GM12878 (cell line): ENCODE measurements at regions of chr2 and their contacts with region 1.

Region 1: DNA sequence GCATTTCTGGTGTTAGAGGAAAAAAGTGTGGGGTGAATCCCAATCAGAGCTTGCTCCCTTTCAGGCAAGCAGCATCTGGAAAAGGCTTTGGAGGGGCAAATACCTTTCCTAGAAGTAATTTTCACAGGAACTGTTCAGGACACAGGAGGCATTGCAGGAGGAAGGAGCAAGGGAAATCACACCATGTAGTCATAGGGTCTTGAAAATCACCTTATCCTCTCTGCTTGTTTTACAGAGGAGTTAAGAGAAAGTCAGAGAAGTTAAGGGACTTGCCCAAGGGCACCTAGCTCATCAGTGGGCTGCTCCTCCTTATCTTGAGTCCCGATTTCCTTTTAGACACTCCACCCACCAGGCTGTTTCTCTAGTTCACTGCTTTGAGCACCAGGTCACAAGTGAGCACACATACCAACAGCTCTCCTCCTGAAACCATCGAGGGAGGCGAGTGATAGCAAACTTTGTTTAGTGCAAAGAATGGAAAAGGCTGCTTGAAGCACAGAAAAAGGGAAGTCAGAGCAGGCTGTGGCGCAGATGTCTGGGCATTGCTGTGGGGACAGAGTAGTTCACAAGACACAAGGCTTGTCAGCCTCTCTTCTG is 89.2 kb upstream of the CXCR4 start:
- DNase-seq: peak; percentile 68
- ATAC-seq: peak; percentile 79
- H3K4me3 ChIP-seq: no peak overlapping the region
- H3K27ac ChIP-seq: no peak overlapping the region
- H3K4me1 ChIP-seq: peaks cover 21% of the 10 kb centered on the region
- H3K27me3 ChIP-seq: no peaks in the 10 kb centered on the region; a peak in 1 of 4 replicates
- CTCF ChIP-seq: no peak
- EP300 ChIP-seq: peak; percentile 26 to 55; a peak in 2 of 4 replicates
- POLR2A ChIP-seq: no peak
- RAD21 ChIP-seq: 0 out of 2 replicates have a peak, but pooled peaks have one; percentile 0

Region 2: GRCh38 chr2:134623796-134624195 is 1583.3 kb before region 1 on chr2:
- CTCF ChIA-PET with region 1: no interaction called
- POLR2A ChIA-PET with region 1: no interaction called
- RAD21 ChIA-PET with region 1: no interaction called
- SMC1A ChIA-PET with region 1: no interaction called
- in situ Hi-C with region 1: no loop called
- intact Hi-C with region 1: no loop called
- DNase-seq: peak; percentile 83
- ATAC-seq: peak; percentile 91
- H3K4me3 ChIP-seq: no peak overlapping the region
- H3K27ac ChIP-seq: peak overlapping the region; percentile 88
- H3K4me1 ChIP-seq: peaks cover 21% of the 10 kb centered on the region
- H3K27me3 ChIP-seq: no peaks in the 10 kb centered on the region
- CTCF ChIP-seq: no peak
- EP300 ChIP-seq: peak; percentile 32 to 67; a peak in 2 of 4 replicates
- POLR2A ChIP-seq: no peak
- RAD21 ChIP-seq: 0 out of 2 replicates have a peak, but pooled peaks have one; percentile 4

Region 3: DNA sequence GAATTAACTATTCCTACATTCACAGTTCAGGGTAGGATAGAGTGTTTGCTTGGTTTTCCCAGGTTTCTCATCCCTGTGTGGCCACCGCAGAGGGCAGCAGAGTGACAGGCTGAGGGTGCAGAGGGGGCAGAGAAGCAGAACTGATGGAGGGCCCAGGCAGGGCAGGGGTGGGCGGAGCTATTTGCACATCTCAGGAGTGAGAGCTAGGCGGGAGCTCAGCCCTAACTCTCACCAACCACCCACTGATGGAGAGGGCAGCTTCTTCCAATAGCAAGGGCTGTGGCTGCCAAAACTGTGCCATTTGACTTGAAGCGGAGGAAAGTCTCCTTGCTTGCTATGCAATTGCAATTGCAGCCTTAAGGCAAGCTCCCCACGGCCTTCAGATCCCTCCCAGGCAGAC is 209.7 kb before region 1 on chr2:
- CTCF ChIA-PET with region 1: interaction called, 3 read pairs
- POLR2A ChIA-PET with region 1: no interaction called
- RAD21 ChIA-PET with region 1: interaction called, 21 read pairs
- SMC1A ChIA-PET with region 1: interaction called, 14 read pairs
- in situ Hi-C with region 1: no loop called
- intact Hi-C with region 1: no loop called
- DNase-seq: no peak
- ATAC-seq: peak; percentile 82
- H3K4me3 ChIP-seq: no peak overlapping the region
- H3K27ac ChIP-seq: no peak overlapping the region
- H3K4me1 ChIP-seq: peaks cover 11% of the 10 kb centered on the region
- H3K27me3 ChIP-seq: no peaks in the 10 kb centered on the region
- CTCF ChIP-seq: peak; percentile 5 to 27 (median 7); a peak in 3 of 6 replicates
- EP300 ChIP-seq: no peak
- POLR2A ChIP-seq: no peak
- RAD21 ChIP-seq: peak; percentile 61

Region 4: DNA sequence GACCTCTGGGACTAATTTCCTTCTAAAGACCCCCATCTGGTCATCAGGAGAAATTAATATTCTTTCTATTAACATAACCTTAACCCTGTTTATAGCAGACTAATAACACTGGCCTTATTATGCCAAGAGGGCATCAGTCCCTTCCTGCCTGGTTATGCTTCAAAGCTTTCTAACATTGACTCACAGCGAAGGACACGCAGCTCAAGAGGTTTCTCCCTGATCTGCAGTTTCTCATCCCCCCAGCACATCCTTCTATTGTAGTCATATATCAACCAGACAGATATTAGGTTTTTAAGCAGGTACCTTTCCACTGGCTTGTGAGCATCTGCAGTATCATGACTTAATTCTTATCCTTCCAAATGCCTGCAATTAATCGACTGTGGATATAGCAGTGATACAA is 10.9 kb after region 1 on chr2:
- CTCF ChIA-PET with region 1: interaction called, 5 read pairs
- POLR2A ChIA-PET with region 1: interaction called, 5 read pairs
- RAD21 ChIA-PET with region 1: interaction called, 28 read pairs
- SMC1A ChIA-PET with region 1: interaction called, 47 read pairs
- in situ Hi-C with region 1: no loop called
- intact Hi-C with region 1: no loop called
- DNase-seq: no peak
- ATAC-seq: peak; percentile 77
- H3K4me3 ChIP-seq: no peak overlapping the region
- H3K27ac ChIP-seq: no peak overlapping the region
- H3K4me1 ChIP-seq: no peaks in the 10 kb centered on the region
- H3K27me3 ChIP-seq: peaks cover 0 to 9% of the 10 kb centered on the region in 2 experiments; a peak in 1 of 4 replicates
- CTCF ChIP-seq: no peak
- EP300 ChIP-seq: peak in 1 of 2 experiments; percentile 40; a peak in 1 of 4 replicates
- POLR2A ChIP-seq: no peak
- RAD21 ChIP-seq: no peak

Region 5: GRCh38 chr2:136246086-136246669 is 39.1 kb after region 1 on chr2:
- CTCF ChIA-PET with region 1: interaction called, 4 read pairs
- POLR2A ChIA-PET with region 1: interaction called, 8 read pairs
- RAD21 ChIA-PET with region 1: interaction called, 48 read pairs
- SMC1A ChIA-PET with region 1: interaction called, 41 read pairs
- in situ Hi-C with region 1: no loop called
- intact Hi-C with region 1: no loop called
- DNase-seq: peak; percentile 60
- ATAC-seq: peak; percentile 96
- H3K4me3 ChIP-seq: no peak overlapping the region
- H3K27ac ChIP-seq: no peak overlapping the region; the same call in 1 of the 2 replicates
- H3K4me1 ChIP-seq: peaks cover 3% of the 10 kb centered on the region; the same call in 1 of the 2 replicates
- H3K27me3 ChIP-seq: 0 out of 4 replicates have a peak, but pooled peaks cover 0 to 2% of the 10 kb centered on the region in 2 experiments
- CTCF ChIP-seq: no peak
- EP300 ChIP-seq: peak; percentile 78 to 87; a peak in 3 of 4 replicates
- POLR2A ChIP-seq: no peak
- RAD21 ChIP-seq: no peak

Region 6: DNA sequence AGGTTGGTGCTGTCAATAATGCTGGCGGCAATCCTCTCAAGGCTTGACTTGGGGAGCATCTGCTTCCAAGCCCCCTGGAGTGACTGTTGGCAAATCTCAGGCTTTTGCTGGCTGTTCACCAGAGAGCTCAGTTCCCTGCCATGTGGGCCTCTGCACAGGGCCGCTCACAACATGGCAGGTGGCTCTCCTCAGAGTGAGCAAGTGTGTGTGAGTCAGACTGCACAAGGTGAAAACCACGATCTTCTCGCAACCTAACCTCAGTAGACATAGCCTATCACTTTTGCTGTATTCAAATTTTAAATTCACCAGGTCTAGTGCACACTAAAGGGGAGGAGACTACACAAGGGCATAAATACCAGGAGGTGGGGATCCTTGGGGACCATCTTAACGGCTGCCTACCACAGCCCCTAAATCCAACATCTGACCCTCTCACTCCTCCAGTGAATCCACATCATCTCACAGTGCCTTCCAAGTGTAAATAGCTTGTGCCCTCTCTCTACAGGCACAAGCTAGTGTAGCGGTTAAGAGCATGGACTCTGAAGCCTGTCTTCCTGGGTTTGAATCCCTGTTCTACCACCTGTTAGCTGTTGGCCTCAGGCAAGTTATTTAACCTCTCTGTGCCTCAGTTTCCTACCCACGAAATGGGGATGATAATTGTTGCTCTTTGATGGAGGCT is 98.5 kb after region 1 on chr2:
- CTCF ChIA-PET with region 1: interaction called, 3 read pairs
- POLR2A ChIA-PET with region 1: interaction called, 3 read pairs
- RAD21 ChIA-PET with region 1: interaction called, 8 read pairs
- SMC1A ChIA-PET with region 1: interaction called, 17 read pairs
- in situ Hi-C with region 1: no loop called
- intact Hi-C with region 1: loop called (anchors 2 kb)
- DNase-seq: no peak
- ATAC-seq: peak; percentile 93
- H3K4me3 ChIP-seq: no peak overlapping the region
- H3K27ac ChIP-seq: no peak overlapping the region
- H3K4me1 ChIP-seq: peaks cover 6% of the 10 kb centered on the region
- H3K27me3 ChIP-seq: peaks cover 0 to 5% of the 10 kb centered on the region in 2 experiments; a peak in 1 of 4 replicates
- CTCF ChIP-seq: no peak
- EP300 ChIP-seq: peak; percentile 62 to 64; a peak in 1 of 4 replicates
- POLR2A ChIP-seq: no peak
- RAD21 ChIP-seq: no peak